CD14-positive monocyte (primary cell): ENCODE measurements at regions of chr11 and their contacts with region 1.

Region 1: GRCh38 chr11:73184953-73185671 is 33.0 kb upstream of the P2RY2 start:
- DNase-seq: peak; percentile 66 to 71 (median 68)
- H3K4me3 ChIP-seq: peak overlapping the region; percentile 21 to 70 (median 43)
- H3K4me3 Mint-ChIP-seq: peak overlapping the region; percentile 77 to 82
- H3K27ac ChIP-seq: peak overlapping the region; percentile 61 to 87
- H3K27ac Mint-ChIP-seq: peak overlapping the region; percentile 72 to 94 (median 88)
- H3K4me1 ChIP-seq: peaks cover 54% of the 10 kb centered on the region in 2 donors
- H3K4me1 Mint-ChIP-seq: peaks cover 54% of the 10 kb centered on the region
- H3K27me3 ChIP-seq: no peaks in the 10 kb centered on the region
- H3K27me3 Mint-ChIP-seq: peaks cover 0 to 3% (median 2%) of the 10 kb centered on the region in 3 donors
- CTCF ChIP-seq: peak; percentile 97

Region 2: GRCh38 chr11:71988050-71988449 is 1197.1 kb before region 1 on chr11:
- intact Hi-C with region 1: no loop called
- DNase-seq: no peak
- H3K4me3 ChIP-seq: no peak overlapping the region
- H3K4me3 Mint-ChIP-seq: no peak overlapping the region
- H3K27ac ChIP-seq: no peak overlapping the region
- H3K27ac Mint-ChIP-seq: no peak overlapping the region
- H3K4me1 ChIP-seq: peaks cover 43 to 44% of the 10 kb centered on the region in 2 donors
- H3K4me1 Mint-ChIP-seq: peaks cover 37% of the 10 kb centered on the region
- H3K27me3 ChIP-seq: no peaks in the 10 kb centered on the region
- H3K27me3 Mint-ChIP-seq: peaks cover 0 to 2% (median under 1%) of the 10 kb centered on the region in 3 donors
- CTCF ChIP-seq: no peak

Region 3: GRCh38 chr11:73204711-73205121 is 19.6 kb after region 1 on chr11:
- intact Hi-C with region 1: loop called in 1 of 2 experiments (anchors 2 kb)
- DNase-seq: peak; percentile 94 to 99 (median 97)
- H3K4me3 ChIP-seq: peak overlapping the region in 1 of 3 experiments; percentile 66
- H3K4me3 Mint-ChIP-seq: peak overlapping the region; percentile 67 to 86
- H3K27ac ChIP-seq: peak overlapping the region; percentile 85 to 91
- H3K27ac Mint-ChIP-seq: peak overlapping the region; percentile 90 to 99 (median 97)
- H3K4me1 ChIP-seq: peaks cover 72 to 76% of the 10 kb centered on the region in 2 donors
- H3K4me1 Mint-ChIP-seq: peaks cover 82% of the 10 kb centered on the region
- H3K27me3 ChIP-seq: no peaks in the 10 kb centered on the region
- H3K27me3 Mint-ChIP-seq: peaks cover 0 to 4% (median 1%) of the 10 kb centered on the region in 3 donors
- CTCF ChIP-seq: no peak

Region 4: DNA sequence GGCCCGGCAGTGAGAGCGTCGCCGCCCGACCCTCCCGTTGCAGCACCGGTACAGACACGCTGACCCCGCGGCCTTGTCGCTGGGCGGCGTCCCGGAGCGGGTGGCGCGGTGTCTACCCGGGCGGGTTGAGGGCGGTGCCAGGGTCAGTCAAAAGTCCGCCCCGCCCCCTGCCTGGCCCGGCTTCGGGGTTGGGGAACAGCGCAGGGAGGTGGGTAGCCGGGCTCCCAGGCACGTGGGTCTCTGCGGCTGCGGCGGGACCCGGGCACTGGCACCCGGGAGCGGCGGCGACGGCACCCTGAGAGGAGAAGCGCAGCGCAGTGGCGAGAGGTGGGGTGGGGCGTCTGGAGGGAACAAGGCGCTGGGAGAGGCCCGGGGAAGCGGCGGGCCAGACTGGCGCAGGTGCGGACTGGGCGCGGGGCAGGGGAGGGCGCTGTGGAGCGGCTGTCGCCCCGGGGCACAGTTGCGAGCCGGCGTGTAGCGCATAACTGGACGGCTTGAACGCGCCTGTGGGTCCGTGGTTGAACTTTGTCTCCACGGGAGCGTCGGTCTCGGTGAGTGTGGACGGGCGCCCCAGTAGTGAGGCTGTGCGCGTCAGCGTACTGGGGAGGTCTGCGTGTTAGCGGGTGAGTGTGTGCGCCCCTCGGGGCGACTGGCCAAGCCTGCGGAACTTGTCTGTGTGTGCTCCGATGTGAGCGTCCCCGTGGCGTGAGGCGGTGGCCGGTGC is 33.2 kb after region 1 on chr11 and contains the start of gene P2RY2:
- intact Hi-C with region 1: loop called (anchors 1 to 5 kb)
- DNase-seq: peak; percentile 77 to 88 (median 80)
- H3K4me3 ChIP-seq: peak within 1 kb of the TSS; percentile 66 to 85 (median 85)
- H3K4me3 Mint-ChIP-seq: peak within 1 kb of the TSS; percentile 94 to 98
- H3K27ac ChIP-seq: peak within 1 kb of the TSS; percentile 79 to 82
- H3K27ac Mint-ChIP-seq: peak within 1 kb of the TSS; percentile 93 to 97 (median 96)
- H3K4me1 ChIP-seq: peaks cover 91 to 94% of the 10 kb centered on the region in 2 donors
- H3K4me1 Mint-ChIP-seq: peaks cover 90% of the 10 kb centered on the region
- H3K27me3 ChIP-seq: no peaks in the 10 kb centered on the region
- H3K27me3 Mint-ChIP-seq: peaks cover 0 to 2% (median 0%) of the 10 kb centered on the region in 3 donors
- CTCF ChIP-seq: peak; percentile 79
- polyA plus RNA-seq, gene P2RY2: 2.8 to 24.1 (median 12.7) TPM

Region 5: GRCh38 chr11:73223998-73224770 is 39.1 kb after region 1 on chr11:
- intact Hi-C with region 1: loop called in 1 of 2 experiments (anchors 5 kb)
- DNase-seq: peak in 2 of 3 donors; percentile 19 to 28
- H3K4me3 ChIP-seq: no peak overlapping the region
- H3K4me3 Mint-ChIP-seq: peak overlapping the region in 1 of 2 donors; percentile 51
- H3K27ac ChIP-seq: peak overlapping the region in 1 of 2 donors; percentile 60
- H3K27ac Mint-ChIP-seq: peak overlapping the region; percentile 13 to 85 (median 63)
- H3K4me1 ChIP-seq: peaks cover 55 to 56% of the 10 kb centered on the region in 2 donors
- H3K4me1 Mint-ChIP-seq: peaks cover 72% of the 10 kb centered on the region
- H3K27me3 ChIP-seq: no peaks in the 10 kb centered on the region
- H3K27me3 Mint-ChIP-seq: peaks cover 0 to 2% (median 0%) of the 10 kb centered on the region in 3 donors
- CTCF ChIP-seq: no peak

Region 6: GRCh38 chr11:73236854-73237253 is 51.7 kb after region 1 on chr11:
- intact Hi-C with region 1: loop called (anchors 2 to 5 kb)
- DNase-seq: peak; percentile 73 to 88 (median 76)
- H3K4me3 ChIP-seq: no peak overlapping the region
- H3K4me3 Mint-ChIP-seq: no peak overlapping the region
- H3K27ac ChIP-seq: peak overlapping the region in 1 of 2 donors; percentile 67
- H3K27ac Mint-ChIP-seq: peak overlapping the region in 6 of 7 donors; percentile 4 to 88 (median 72)
- H3K4me1 ChIP-seq: peaks cover 0 to 5% of the 10 kb centered on the region in 2 donors
- H3K4me1 Mint-ChIP-seq: peaks cover 22% of the 10 kb centered on the region
- H3K27me3 ChIP-seq: no peaks in the 10 kb centered on the region
- H3K27me3 Mint-ChIP-seq: peaks cover 0 to 1% (median 0%) of the 10 kb centered on the region in 3 donors
- CTCF ChIP-seq: peak; percentile 94

Region 7: DNA sequence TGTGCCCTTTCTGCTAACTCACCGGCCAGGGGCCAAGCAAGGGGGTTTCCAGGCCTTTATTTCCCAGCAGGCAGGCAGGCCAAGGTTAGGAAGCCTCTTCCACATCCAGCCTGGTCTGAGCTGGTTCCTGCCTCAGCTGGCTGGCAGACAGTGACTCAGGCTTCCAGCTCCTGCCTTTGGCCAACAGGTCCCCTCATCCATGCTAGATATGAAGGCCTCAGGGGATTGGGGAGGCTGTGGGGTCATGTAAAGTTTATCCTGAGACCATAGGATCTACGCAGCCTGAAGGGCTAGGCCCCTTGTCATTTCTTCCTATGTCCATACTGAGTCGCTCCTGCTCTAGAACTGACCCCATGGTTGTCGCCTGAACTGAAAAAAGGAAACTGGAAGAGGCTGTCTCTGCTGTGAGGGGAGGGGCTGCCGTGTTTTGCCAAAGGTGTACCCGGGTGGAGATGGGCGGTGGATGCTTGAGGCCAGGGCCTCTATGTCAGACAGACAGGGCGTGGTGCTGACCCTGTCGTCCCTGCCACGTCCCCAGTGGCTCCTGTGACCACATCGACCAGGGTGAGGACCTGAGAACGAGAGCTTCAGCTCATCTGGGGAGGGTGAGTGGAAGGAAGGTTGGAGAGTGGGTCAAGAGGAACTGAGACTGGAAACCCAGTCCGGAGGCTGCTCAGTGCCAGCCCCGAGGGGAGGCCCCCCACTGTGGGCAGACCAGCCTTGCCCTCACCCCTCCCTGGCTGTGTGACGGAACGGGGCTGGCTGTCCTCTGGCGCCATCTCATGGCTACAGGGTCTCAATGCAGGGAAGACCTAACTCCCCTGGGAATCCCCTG is 104.0 kb after region 1 on chr11:
- intact Hi-C with region 1: loop called (anchors 5 kb)
- DNase-seq: peak; percentile 91 to 97 (median 95)
- H3K4me3 ChIP-seq: peak overlapping the region in 2 of 3 experiments; percentile 7 to 60
- H3K4me3 Mint-ChIP-seq: peak overlapping the region; percentile 62 to 80
- H3K27ac ChIP-seq: peak overlapping the region; percentile 94
- H3K27ac Mint-ChIP-seq: peak overlapping the region; percentile 96 to 99 (median 98)
- H3K4me1 ChIP-seq: peaks cover 38 to 48% of the 10 kb centered on the region in 2 donors
- H3K4me1 Mint-ChIP-seq: peaks cover 61% of the 10 kb centered on the region
- H3K27me3 ChIP-seq: no peaks in the 10 kb centered on the region
- H3K27me3 Mint-ChIP-seq: peaks cover 5 to 20% (median 8%) of the 10 kb centered on the region in 3 donors
- CTCF ChIP-seq: peak; percentile 99

Region 8: GRCh38 chr11:73295231-73295995 is 110.3 kb after region 1 on chr11:
- intact Hi-C with region 1: loop called in 1 of 2 experiments (anchors 5 kb)
- DNase-seq: peak; percentile 76 to 84 (median 81)
- H3K4me3 ChIP-seq: no peak overlapping the region
- H3K4me3 Mint-ChIP-seq: no peak overlapping the region
- H3K27ac ChIP-seq: no peak overlapping the region
- H3K27ac Mint-ChIP-seq: peak overlapping the region in 1 of 7 donors; percentile 77
- H3K4me1 ChIP-seq: peaks cover 11 to 15% of the 10 kb centered on the region in 2 donors
- H3K4me1 Mint-ChIP-seq: peaks cover 29% of the 10 kb centered on the region
- H3K27me3 ChIP-seq: no peaks in the 10 kb centered on the region
- H3K27me3 Mint-ChIP-seq: peaks cover 5 to 15% (median 6%) of the 10 kb centered on the region in 3 donors
- CTCF ChIP-seq: peak; percentile 95